Common myeloid progenitor, CD34-positive (primary cell): ENCODE measurements at regions of chr6 and their contacts with region 1.

Region 1: DNA sequence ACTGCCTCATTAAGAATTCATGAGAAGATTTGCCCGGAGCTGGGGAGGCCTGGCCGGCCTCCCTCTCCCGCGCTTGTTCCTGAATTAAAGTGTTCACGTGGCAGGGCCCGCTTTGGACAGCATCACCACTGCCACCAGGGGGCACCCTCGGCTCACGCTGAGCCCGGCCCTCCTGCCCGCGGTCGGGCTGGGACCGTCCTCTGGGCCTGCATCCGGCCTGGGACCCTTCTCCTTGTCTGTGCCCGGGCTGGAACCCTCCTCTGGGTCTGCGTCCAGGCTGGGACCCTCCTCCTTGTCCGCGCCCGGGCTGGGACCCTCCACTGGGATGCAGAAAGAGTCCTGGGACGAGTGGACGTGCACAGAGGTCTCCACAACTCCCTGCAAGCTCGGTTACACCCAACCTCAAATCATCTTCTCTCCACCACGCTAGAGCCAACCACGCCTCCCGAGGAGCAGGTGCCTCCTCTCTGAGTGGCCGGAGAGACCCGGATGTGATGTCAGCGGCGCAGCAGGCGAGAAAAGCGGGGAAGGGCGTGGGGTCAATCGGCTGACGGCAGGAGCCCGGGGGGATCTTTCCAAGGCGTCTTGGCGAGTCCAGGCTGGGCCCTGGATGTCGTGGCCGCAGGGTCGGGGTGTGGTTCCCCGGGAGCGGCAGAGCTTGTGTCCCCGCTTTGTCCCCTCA is 50.9 kb upstream of the DACT2 start:
- DNase-seq: peak; percentile 40 to 60 (median 44)
- H3K4me3 ChIP-seq: no peak overlapping the region
- H3K27ac ChIP-seq: no peak overlapping the region
- H3K4me1 ChIP-seq: peaks cover 0 to 11% (median 1%) of the 10 kb centered on the region in 4 experiments
- H3K27me3 ChIP-seq: peaks cover 0 to 24% (median 4%) of the 10 kb centered on the region in 5 experiments

Region 2: GRCh38 chr6:168088161-168089053 is 282.0 kb before region 1 on chr6:
- CTCF ChIA-PET with region 1: no interaction called
- POLR2A ChIA-PET with region 1: no interaction called
- DNase-seq: no peak
- H3K4me3 ChIP-seq: no peak overlapping the region
- H3K27ac ChIP-seq: no peak overlapping the region
- H3K4me1 ChIP-seq: no peaks in the 10 kb centered on the region
- H3K27me3 ChIP-seq: peaks cover 0 to 13% (median 1%) of the 10 kb centered on the region in 5 experiments

Region 3: GRCh38 chr6:168384666-168385397 is 14.4 kb after region 1 on chr6:
- CTCF ChIA-PET with region 1: no interaction called
- POLR2A ChIA-PET with region 1: no interaction called
- DNase-seq: no peak
- H3K4me3 ChIP-seq: no peak overlapping the region
- H3K27ac ChIP-seq: no peak overlapping the region
- H3K4me1 ChIP-seq: no peaks in the 10 kb centered on the region
- H3K27me3 ChIP-seq: peaks cover 0 to 9% (median 0%) of the 10 kb centered on the region in 5 experiments

Region 4: DNA sequence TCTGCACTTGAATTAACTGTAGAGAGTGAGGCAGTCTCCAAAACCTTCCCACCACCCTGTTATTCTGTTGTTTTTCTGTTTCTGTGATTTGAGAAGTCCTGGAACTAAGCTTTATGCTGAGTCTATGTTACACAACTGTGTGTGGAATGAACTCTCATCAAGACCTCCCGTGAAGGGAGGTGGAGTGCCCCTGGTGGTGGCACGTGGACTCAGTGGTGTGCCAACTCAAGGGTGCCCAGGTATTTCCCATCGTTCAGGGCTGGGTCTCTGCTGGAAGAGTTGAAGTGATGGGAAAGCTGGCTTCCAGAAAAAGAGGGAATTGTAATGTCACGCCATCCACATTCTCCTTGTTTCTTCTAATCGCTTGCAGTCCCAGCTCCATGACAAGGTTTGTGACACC is 444.8 kb after region 1 on chr6:
- CTCF ChIA-PET with region 1: no interaction called
- POLR2A ChIA-PET with region 1: no interaction called
- DNase-seq: no peak
- H3K4me3 ChIP-seq: no peak overlapping the region
- H3K27ac ChIP-seq: no peak overlapping the region
- H3K4me1 ChIP-seq: no peaks in the 10 kb centered on the region
- H3K27me3 ChIP-seq: no peaks in the 10 kb centered on the region

Region 5: DNA sequence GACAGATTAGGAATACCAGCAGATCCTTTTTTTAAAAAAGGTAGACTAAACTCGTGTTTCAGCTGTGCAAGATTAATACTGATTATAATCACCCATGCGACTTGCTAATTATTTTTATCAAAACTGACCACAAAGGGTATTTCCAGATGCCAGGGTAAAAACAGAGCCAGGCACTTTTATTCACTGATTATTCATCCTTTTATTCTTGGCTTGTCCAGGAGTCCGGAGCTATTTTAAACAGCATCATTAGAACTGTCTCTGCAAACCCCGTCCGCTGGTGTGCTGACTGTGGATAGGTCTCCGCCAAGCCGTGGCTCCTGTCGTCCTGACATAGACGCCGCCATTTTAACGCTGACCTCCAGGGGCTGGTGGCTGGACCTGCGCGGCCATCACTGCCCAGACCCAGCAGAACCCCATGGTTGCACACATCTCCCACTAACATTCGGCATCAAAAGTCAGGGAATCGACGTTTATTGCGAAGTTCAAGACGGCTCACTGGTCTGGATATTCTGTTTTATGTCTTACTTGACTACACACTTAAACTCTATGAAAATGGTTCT is 518.4 kb after region 1 on chr6:
- CTCF ChIA-PET with region 1: interaction called, 18 read pairs
- POLR2A ChIA-PET with region 1: no interaction called
- DNase-seq: no peak
- H3K4me3 ChIP-seq: no peak overlapping the region
- H3K27ac ChIP-seq: no peak overlapping the region
- H3K4me1 ChIP-seq: peaks cover 0 to 6% (median 0%) of the 10 kb centered on the region in 4 experiments
- H3K27me3 ChIP-seq: peaks cover 0 to 3% (median 0%) of the 10 kb centered on the region in 5 experiments